PC-9 (cell line): ENCODE measurements at regions of chr7 and their contacts with region 1.

Region 1: DNA sequence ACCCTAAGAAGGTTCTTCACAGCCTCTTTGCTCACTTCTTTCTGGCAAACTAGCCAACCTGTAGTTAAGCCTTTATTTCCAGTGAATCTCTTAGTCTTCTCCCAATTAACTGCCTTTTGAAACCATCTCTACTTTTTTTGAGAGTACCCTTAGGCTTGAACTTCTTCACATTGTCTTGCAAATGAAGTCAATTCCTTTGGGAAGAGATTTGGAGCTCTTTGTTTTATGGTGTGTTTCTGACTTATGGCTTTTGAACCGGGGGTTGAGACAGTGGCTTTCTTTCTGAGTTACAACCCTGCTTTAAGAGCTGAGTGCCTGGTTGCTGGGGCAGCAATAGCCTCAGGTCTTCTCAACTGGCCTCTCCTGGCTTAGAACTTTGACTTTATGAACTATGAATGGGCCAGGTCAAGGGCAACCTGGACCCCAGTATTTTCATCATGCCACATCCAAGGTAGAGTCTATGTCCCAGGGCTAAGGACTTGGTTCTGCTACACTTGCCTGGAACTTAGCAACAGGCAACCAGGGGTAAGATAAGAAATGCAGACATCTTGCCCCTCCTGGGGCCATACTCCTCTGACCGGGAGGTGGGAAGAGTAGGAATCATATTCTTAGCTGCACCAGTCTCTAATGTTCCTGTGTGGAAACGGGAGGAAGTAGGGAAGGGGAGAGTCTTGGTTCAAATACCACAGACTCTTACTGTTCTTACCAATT is 53.0 kb downstream of the SP4 start:
- DNase-seq: no peak
- H3K4me3 ChIP-seq: no peak overlapping the region
- H3K27ac ChIP-seq: no peak overlapping the region
- H3K4me1 ChIP-seq: no peaks in the 10 kb centered on the region
- H3K27me3 ChIP-seq: no peaks in the 10 kb centered on the region
- CTCF ChIP-seq: no peak

Region 2: GRCh38 chr7:21454182-21454581 is 26.7 kb before region 1 on chr7:
- CTCF ChIA-PET with region 1: no interaction called
- POLR2A ChIA-PET with region 1: interaction called, 51 read pairs
- intact Hi-C with region 1: no loop called
- DNase-seq: no peak
- H3K4me3 ChIP-seq: no peak overlapping the region
- H3K27ac ChIP-seq: no peak overlapping the region
- H3K4me1 ChIP-seq: no peaks in the 10 kb centered on the region
- H3K27me3 ChIP-seq: no peaks in the 10 kb centered on the region
- CTCF ChIP-seq: no peak